ENCODE measurements at regions of chr13 and their contacts with region 1.

Region 1: GRCh38 chr13:46134961-46135522 is 30.2 kb upstream of the CPB2 start:
- DNase-seq: no peak
- ATAC-seq: no peak
- H3K4me3 ChIP-seq: no peak overlapping the region
- H3K4me3 Mint-ChIP-seq: no peak overlapping the region
- H3K27ac ChIP-seq: no peak overlapping the region
- H3K27ac Mint-ChIP-seq: peak overlapping the region; percentile 64
- H3K4me1 ChIP-seq: no peaks in the 10 kb centered on the region
- H3K4me1 Mint-ChIP-seq: peaks cover 22% of the 10 kb centered on the region
- H3K27me3 ChIP-seq: no peaks in the 10 kb centered on the region
- H3K27me3 Mint-ChIP-seq: no peaks in the 10 kb centered on the region
- CTCF ChIP-seq: no peak

Region 2: GRCh38 chr13:45167611-45168556 is 967.2 kb before region 1 on chr13:
- CTCF ChIA-PET with region 1: no interaction called
- POLR2A ChIA-PET with region 1: no interaction called
- intact Hi-C with region 1: no loop called
- DNase-seq: no peak
- ATAC-seq: no peak
- H3K4me3 ChIP-seq: no peak overlapping the region
- H3K4me3 Mint-ChIP-seq: no peak overlapping the region
- H3K27ac ChIP-seq: no peak overlapping the region
- H3K27ac Mint-ChIP-seq: no peak overlapping the region
- H3K4me1 ChIP-seq: no peaks in the 10 kb centered on the region
- H3K4me1 Mint-ChIP-seq: peaks cover 4% of the 10 kb centered on the region
- H3K27me3 ChIP-seq: no peaks in the 10 kb centered on the region
- H3K27me3 Mint-ChIP-seq: no peaks in the 10 kb centered on the region
- CTCF ChIP-seq: no peak

Region 3: GRCh38 chr13:45961468-45961867 is 173.6 kb before region 1 on chr13:
- CTCF ChIA-PET with region 1: no interaction called
- POLR2A ChIA-PET with region 1: no interaction called
- intact Hi-C with region 1: no loop called
- DNase-seq: no peak
- ATAC-seq: no peak
- H3K4me3 ChIP-seq: no peak overlapping the region
- H3K4me3 Mint-ChIP-seq: no peak overlapping the region
- H3K27ac ChIP-seq: no peak overlapping the region
- H3K27ac Mint-ChIP-seq: peak overlapping the region; percentile 24
- H3K4me1 ChIP-seq: no peaks in the 10 kb centered on the region
- H3K4me1 Mint-ChIP-seq: no peaks in the 10 kb centered on the region
- H3K27me3 ChIP-seq: no peaks in the 10 kb centered on the region
- H3K27me3 Mint-ChIP-seq: no peaks in the 10 kb centered on the region
- CTCF ChIP-seq: no peak

Region 4: GRCh38 chr13:46149272-46150133 is 14.5 kb after region 1 on chr13:
- CTCF ChIA-PET with region 1: no interaction called
- POLR2A ChIA-PET with region 1: interaction called, 3 read pairs
- intact Hi-C with region 1: loop called in 1 of 2 experiments (anchors 2 kb)
- DNase-seq: peak in 1 of 14 experiments; percentile 31
- ATAC-seq: no peak
- H3K4me3 ChIP-seq: no peak overlapping the region
- H3K4me3 Mint-ChIP-seq: no peak overlapping the region
- H3K27ac ChIP-seq: peak overlapping the region in 1 of 2 donors; percentile 32
- H3K27ac Mint-ChIP-seq: peak overlapping the region; percentile 79
- H3K4me1 ChIP-seq: peaks cover 2% of the 10 kb centered on the region
- H3K4me1 Mint-ChIP-seq: peaks cover 52% of the 10 kb centered on the region
- H3K27me3 ChIP-seq: no peaks in the 10 kb centered on the region
- H3K27me3 Mint-ChIP-seq: no peaks in the 10 kb centered on the region
- CTCF ChIP-seq: no peak

Measured in CD4-positive, alpha-beta T cell (primary cell).